Activated B cell treated with CpG ODN at 0.5 μM for 24 hours (primary cell): ENCODE measurements at regions of chr16 and their contacts with region 1.

Region 1: DNA sequence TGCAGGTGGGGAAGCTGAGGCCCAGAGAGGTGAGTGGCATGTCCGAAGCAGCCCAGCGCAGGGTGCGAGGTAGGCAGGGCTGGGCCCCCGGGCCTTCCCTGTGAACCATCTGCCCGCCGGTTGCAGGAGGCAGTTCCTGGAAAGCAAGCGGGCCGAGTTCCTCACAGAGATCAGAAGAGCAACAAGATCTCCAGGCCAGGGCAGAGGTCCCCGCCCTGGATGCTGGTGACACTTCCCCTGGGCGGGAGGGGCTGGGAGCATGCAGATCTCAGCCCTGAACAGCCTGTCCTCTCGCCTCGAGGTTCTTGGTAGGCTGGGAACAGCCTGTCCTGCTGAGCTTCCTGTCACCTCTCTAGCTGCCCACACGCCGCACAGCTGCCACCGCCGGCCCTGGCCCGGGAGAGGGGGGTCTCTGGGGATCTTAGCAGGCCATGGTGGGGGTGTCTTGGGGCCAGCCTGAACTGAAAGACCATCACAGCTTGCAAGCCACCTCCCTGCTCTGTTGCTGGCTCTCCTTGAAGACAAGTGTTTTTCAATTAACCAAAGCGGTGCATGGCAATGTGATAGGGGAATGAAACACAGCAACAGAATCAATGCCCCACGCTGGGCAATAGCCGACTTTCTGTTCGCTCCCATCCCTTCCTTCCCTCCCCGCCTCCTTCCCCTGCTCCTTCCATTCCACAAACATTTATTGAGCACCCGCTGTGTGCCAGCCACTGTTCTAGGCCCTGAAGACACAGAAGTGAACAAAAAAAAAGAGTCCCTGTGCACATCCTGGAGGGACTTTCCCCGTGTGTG is 31.7 kb downstream of the SOCS1 start:
- DNase-seq: peak; percentile 34
- ATAC-seq: peak; percentile 31
- H3K4me3 Mint-ChIP-seq: peak overlapping the region; percentile 69
- H3K27ac Mint-ChIP-seq: peak overlapping the region; percentile 83
- H3K4me1 Mint-ChIP-seq: peaks cover 37% of the 10 kb centered on the region
- H3K27me3 Mint-ChIP-seq: no peaks in the 10 kb centered on the region
- CTCF ChIP-seq: no peak

Region 2: DNA sequence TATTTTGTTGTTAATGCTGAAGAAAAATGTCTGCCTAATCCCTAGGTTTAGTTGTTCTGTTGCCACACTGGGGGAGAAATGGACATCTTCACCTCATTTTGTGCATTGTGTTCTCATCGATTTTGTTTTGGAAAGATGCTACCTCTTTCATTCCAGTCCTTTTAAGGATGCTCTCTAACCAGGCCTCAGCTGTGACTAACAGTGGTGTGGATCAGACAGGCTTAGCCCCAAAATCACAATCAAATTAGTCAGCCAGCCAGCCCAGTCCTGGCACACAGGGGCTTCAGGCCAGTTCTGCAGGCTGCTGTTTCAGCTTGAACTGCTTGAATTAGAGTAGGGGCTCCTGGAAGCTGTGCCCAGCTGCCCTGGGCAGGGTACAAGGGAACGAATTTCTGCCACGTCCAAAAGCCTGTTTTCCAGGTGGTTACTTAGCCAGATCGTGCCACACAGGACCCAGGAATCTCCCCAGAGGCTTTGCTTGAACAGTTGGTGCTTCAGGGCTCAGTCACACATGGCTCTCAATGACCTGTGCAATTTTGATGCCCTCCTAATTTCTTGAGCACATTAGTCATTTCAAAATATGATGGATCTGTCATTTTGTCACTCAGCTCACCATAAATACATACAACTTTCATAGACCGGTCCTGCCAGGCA is 219.2 kb before region 1 on chr16:
- CTCF ChIA-PET with region 1: no interaction called
- POLR2A ChIA-PET with region 1: no interaction called
- intact Hi-C with region 1: no loop called
- DNase-seq: no peak
- ATAC-seq: no peak
- H3K4me3 Mint-ChIP-seq: no peak overlapping the region
- H3K27ac Mint-ChIP-seq: no peak overlapping the region
- H3K4me1 Mint-ChIP-seq: no peaks in the 10 kb centered on the region
- H3K27me3 Mint-ChIP-seq: no peaks in the 10 kb centered on the region
- CTCF ChIP-seq: no peak

Region 3: GRCh38 chr16:11105038-11105903 is 119.0 kb before region 1 on chr16:
- CTCF ChIA-PET with region 1: interaction called, 4 read pairs
- POLR2A ChIA-PET with region 1: interaction called, 11 read pairs
- intact Hi-C with region 1: no loop called
- DNase-seq: no peak
- ATAC-seq: peak; percentile 87
- H3K4me3 Mint-ChIP-seq: peak overlapping the region; percentile 72
- H3K27ac Mint-ChIP-seq: peak overlapping the region; percentile 92
- H3K4me1 Mint-ChIP-seq: peaks cover 45% of the 10 kb centered on the region
- H3K27me3 Mint-ChIP-seq: no peaks in the 10 kb centered on the region
- CTCF ChIP-seq: no peak

Region 4: GRCh38 chr16:11201498-11202259 is 22.6 kb before region 1 on chr16:
- CTCF ChIA-PET with region 1: no interaction called
- POLR2A ChIA-PET with region 1: interaction called, 21 read pairs
- intact Hi-C with region 1: loop called (anchors 1 kb)
- DNase-seq: no peak
- ATAC-seq: no peak
- H3K4me3 Mint-ChIP-seq: no peak overlapping the region
- H3K27ac Mint-ChIP-seq: peak overlapping the region; percentile 26
- H3K4me1 Mint-ChIP-seq: peaks cover 52% of the 10 kb centered on the region
- H3K27me3 Mint-ChIP-seq: peaks cover 7% of the 10 kb centered on the region
- CTCF ChIP-seq: no peak

Region 5: DNA sequence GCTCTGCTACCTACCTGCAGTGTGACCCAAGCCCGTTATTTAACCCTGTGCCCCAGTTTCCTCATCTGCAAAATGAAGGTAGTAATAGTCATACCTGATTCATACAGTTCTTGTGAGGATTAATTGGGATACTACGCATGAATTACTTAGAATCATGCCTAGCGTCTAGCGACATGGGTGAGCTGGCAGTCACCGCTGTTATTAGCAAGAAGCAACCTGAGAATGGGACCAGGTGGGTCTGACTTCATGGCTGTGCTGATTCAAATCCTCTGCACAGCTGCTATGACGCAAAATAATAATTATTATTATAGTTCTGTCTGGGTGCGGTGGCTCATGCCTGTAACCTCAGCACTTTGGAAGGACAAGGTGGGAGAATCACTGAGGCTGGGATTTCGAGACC is 23.8 kb after region 1 on chr16:
- CTCF ChIA-PET with region 1: no interaction called
- POLR2A ChIA-PET with region 1: interaction called, 79 read pairs
- intact Hi-C with region 1: no loop called
- DNase-seq: no peak
- ATAC-seq: peak; percentile 27
- H3K4me3 Mint-ChIP-seq: no peak overlapping the region
- H3K27ac Mint-ChIP-seq: no peak overlapping the region
- H3K4me1 Mint-ChIP-seq: peaks cover 38% of the 10 kb centered on the region
- H3K27me3 Mint-ChIP-seq: no peaks in the 10 kb centered on the region
- CTCF ChIP-seq: no peak

Region 6: DNA sequence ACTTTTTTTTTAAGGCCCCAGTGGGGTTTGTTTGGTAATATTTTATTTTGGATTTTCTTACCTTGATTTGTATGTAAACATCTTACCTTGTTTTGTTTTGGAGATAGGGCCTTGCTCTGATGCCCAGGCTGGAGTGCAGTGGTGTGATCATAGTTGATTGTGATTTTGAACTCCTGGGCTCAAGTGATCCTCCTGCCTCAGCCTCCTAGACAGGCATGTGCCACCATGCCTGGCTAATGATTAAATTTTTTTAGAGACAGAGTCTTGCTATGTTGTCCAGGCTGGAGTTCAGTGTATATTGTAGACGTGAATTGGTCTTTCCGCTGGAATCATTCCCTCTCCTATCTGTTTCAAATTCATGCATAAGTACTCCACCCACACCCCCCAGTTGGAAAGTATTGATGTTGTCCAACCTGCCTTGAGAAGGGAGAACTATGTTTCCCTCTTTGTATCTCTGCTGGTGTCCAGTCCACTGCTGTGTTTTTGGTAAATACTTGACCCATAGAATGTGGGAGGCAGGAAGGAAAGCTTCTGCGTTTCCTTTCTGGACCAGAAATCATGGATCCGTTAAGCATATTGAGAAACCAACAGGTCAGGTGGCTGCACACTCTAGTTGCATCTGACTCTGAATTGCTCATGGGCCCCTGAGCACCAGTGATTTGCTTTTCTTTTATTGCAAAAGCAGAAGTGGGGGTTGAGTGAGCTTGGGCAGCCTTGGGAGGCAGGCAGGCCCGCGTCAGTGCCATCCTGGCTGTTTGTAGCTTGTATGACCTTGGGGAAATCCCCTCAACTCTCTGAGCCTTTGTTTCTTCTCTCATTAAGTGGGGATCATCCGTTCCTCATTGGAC is 146.0 kb after region 1 on chr16:
- CTCF ChIA-PET with region 1: no interaction called
- POLR2A ChIA-PET with region 1: interaction called, 11 read pairs
- intact Hi-C with region 1: no loop called
- DNase-seq: peak; percentile 53
- ATAC-seq: peak; percentile 96
- H3K4me3 Mint-ChIP-seq: peak overlapping the region; percentile 69
- H3K27ac Mint-ChIP-seq: peak overlapping the region; percentile 80
- H3K4me1 Mint-ChIP-seq: peaks cover 40% of the 10 kb centered on the region
- H3K27me3 Mint-ChIP-seq: no peaks in the 10 kb centered on the region
- CTCF ChIP-seq: no peak